ENCODE measurements at regions of chr16 and their contacts with region 1.

Region 1: GRCh38 chr16:50210266-50211038 is 55.9 kb upstream of the ADCY7 start:
- DNase-seq: peak; percentile 85
- ATAC-seq: peak; percentile 98
- H3K4me3 Mint-ChIP-seq: no peak overlapping the region
- H3K27ac Mint-ChIP-seq: peak overlapping the region; percentile 84
- H3K4me1 Mint-ChIP-seq: peaks cover 36% of the 10 kb centered on the region
- H3K27me3 Mint-ChIP-seq: no peaks in the 10 kb centered on the region

Region 2: DNA sequence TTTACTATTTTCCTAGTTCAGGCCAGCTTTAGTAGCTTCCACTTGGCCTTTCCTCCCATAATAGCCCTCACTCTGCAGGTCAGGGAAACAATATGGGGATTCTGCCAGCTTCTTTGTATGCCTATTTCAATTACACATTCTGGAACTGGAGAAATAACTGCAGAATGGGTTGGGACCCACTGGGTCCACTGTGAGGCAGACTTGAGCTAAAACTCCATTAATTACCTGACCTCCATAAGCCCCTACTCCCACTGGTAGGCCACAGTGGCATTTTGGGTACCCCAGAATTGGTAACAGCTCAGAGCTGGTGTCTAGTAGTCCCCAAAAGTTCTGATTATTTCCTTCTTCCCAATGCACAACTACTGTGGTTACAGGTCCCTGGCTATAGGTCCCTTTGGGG is 74.1 kb before region 1 on chr16:
- CTCF ChIA-PET with region 1: interaction called, 15 read pairs
- POLR2A ChIA-PET with region 1: no interaction called
- intact Hi-C with region 1: no loop called
- DNase-seq: no peak
- ATAC-seq: no peak
- H3K4me3 Mint-ChIP-seq: no peak overlapping the region
- H3K27ac Mint-ChIP-seq: no peak overlapping the region
- H3K4me1 Mint-ChIP-seq: no peaks in the 10 kb centered on the region
- H3K27me3 Mint-ChIP-seq: no peaks in the 10 kb centered on the region

Region 3: DNA sequence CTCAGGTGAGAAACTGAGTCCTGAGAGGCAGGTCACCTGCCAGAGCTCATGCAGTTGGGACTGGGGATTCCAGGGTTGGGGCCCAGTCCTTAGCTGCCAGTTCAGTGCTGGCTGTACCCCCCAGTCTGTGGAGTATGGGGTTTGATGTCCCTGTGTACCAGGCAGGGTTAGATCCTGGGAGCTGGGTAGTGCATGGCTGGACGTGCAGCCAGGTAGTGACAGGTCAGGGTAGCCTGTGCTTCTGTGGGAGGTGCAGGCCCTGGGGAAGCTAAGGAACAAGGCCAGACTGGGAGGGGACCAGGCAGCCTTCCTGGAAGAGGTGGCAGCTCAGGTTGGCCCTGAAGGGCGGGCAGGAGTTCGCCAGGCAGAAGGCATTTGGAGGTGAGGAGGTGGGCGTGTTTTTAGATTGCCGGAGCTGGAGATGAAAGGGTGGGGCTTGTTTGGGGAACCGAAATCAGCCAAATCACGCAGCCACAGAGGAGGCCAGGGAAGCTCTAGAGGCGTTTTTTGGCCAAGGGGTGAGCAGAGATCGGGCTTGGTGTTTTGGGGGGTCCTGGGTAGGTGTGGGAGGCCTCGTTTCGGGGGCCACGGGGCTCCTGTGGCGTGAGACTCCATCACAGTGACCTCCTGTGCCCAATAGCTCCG is 63.4 kb after region 1 on chr16:
- CTCF ChIA-PET with region 1: interaction called, 5 read pairs
- POLR2A ChIA-PET with region 1: no interaction called
- intact Hi-C with region 1: loop called in 1 of 2 experiments (anchors 5 kb)
- DNase-seq: peak; percentile 73
- ATAC-seq: peak; percentile 37
- H3K4me3 Mint-ChIP-seq: peak overlapping the region; percentile 97
- H3K27ac Mint-ChIP-seq: peak overlapping the region; percentile 100
- H3K4me1 Mint-ChIP-seq: peaks cover 92% of the 10 kb centered on the region
- H3K27me3 Mint-ChIP-seq: no peaks in the 10 kb centered on the region

Region 4: DNA sequence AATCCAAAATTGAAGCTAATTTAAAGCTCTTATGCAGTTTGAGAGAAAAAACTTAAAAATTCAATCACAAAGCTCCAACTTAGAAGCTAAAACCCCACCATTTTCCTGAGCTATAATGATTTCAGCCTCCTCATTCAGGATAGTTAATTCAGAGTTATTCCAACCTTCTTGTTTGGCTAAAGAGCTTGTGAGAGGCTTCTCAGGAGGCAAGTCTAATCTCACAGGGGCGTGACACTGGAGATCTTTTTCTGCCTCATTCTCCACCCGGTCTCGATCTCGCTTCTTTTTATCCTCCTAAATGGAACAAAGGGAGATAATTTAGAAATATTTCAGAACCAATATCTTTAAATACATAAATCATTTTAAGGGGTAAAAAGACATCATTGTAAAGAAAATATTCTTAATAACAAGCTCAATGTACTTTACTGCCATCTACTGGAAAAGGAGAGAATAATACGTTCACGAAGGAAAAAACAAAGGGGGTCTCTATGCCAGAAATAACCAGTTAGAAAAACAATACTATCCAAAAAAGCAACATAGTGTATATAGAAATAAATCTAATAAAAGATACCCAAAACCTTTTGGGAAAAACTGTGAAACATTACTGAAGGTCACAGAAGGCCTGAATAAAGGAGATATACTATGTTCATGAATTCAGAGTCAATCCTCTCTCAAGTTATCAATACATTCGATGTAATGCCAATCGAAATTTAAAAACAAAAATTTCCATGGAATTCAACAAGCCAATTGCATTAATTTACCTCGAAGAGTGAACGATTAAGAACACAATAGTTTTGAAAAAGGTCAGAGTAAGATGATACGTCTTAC is 144.4 kb after region 1 on chr16:
- CTCF ChIA-PET with region 1: interaction called, 30 read pairs
- POLR2A ChIA-PET with region 1: no interaction called
- intact Hi-C with region 1: loop called (anchors 1 to 2 kb)
- DNase-seq: no peak
- ATAC-seq: no peak
- H3K4me3 Mint-ChIP-seq: no peak overlapping the region
- H3K27ac Mint-ChIP-seq: no peak overlapping the region
- H3K4me1 Mint-ChIP-seq: peaks cover 34% of the 10 kb centered on the region
- H3K27me3 Mint-ChIP-seq: no peaks in the 10 kb centered on the region

Region 5: DNA sequence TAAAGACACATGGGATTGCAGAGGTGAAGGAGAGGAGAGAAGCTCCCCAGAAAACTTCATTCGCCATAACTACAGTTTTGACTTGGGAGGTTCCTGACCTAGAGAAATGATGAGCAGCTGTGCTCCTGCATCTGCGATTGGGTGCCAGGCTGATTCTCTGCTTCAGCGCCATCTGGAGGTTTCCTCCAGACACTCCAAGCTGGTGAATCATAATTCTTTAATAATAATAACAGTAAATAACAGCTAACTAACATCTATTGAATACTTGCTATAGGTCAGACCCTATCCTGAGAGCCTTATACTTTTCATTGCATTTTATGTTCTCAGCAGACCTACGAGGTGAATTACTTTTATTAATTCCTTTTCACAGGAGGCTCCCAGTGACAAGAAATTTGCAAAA is 1760.7 kb after region 1 on chr16:
- CTCF ChIA-PET with region 1: no interaction called
- POLR2A ChIA-PET with region 1: no interaction called
- intact Hi-C with region 1: no loop called
- DNase-seq: no peak
- ATAC-seq: no peak
- H3K4me3 Mint-ChIP-seq: no peak overlapping the region
- H3K27ac Mint-ChIP-seq: no peak overlapping the region
- H3K4me1 Mint-ChIP-seq: no peaks in the 10 kb centered on the region
- H3K27me3 Mint-ChIP-seq: no peaks in the 10 kb centered on the region

Measured in activated CD4-positive, alpha-beta T cell treated with anti-CD3 and anti-CD28 coated beads for 36 hours (primary cell).